Activated CD4-positive, alpha-beta memory T cell treated with anti-CD3 and anti-CD28 coated beads, Interleukin-2, amount 10 ng/mL, durations not matched to agents 7 days and 5 days (primary cell): ENCODE measurements at regions of chr1 and their contacts with region 1.

Region 1: GRCh38 chr1:101122452-101123166 is 97.0 kb upstream of the DPH5 start:
- DNase-seq: peak; percentile 34
- H3K4me3 Mint-ChIP-seq: peak overlapping the region; percentile 33
- H3K27ac Mint-ChIP-seq: peak overlapping the region; percentile 80
- H3K4me1 Mint-ChIP-seq: peaks cover 60% of the 10 kb centered on the region
- H3K27me3 Mint-ChIP-seq: peaks cover 4% of the 10 kb centered on the region

Region 2: DNA sequence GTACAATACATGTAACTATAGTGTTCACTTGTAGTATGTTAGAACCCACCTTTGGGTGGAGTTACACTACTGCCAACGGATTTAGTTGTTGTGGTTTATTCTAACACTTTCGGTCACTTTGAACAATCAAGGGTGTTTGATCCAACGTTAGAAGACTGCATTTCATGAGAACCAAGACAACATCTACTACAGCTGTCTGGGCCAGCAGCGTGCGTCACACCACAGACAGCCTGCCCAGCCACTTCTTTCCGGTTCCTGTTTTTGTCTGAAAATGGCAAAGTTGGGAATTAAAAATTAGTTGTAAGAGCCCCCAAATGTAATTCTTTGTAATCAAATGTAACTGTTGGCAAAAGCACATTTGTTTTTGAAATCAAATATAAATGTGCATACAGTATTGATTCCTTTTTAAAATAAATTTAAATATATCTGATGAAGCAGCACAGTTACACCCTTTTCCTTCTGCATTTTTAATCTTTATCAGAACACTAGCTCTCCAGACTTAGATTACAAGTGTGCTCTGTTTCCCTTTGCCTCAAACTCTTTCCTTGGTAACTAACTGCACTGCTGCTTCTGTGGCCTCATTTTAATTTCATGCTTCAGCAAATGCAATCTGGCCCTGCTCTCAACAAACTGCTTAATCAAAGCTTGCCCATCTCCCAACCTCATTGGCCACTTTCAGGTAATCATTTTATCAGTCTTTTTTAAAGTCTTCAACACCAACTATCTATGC is 10.4 kb before region 1 on chr1:
- CTCF ChIA-PET with region 1: interaction called, 6 read pairs
- POLR2A ChIA-PET with region 1: interaction called, 19 read pairs
- DNase-seq: peak; percentile 78
- H3K4me3 Mint-ChIP-seq: no peak overlapping the region
- H3K27ac Mint-ChIP-seq: peak overlapping the region; percentile 94
- H3K4me1 Mint-ChIP-seq: peaks cover 52% of the 10 kb centered on the region
- H3K27me3 Mint-ChIP-seq: no peaks in the 10 kb centered on the region